ENCODE measurements at regions of chr11 and their contacts with region 1.

Region 1: GRCh38 chr11:63032457-63032856 is 16.8 kb upstream of the SLC22A8 start:
- DNase-seq: no peak
- H3K4me3 Mint-ChIP-seq: no peak overlapping the region
- H3K27ac Mint-ChIP-seq: no peak overlapping the region
- H3K4me1 Mint-ChIP-seq: peaks cover 1% of the 10 kb centered on the region
- H3K27me3 Mint-ChIP-seq: peaks cover 12% of the 10 kb centered on the region

Region 2: DNA sequence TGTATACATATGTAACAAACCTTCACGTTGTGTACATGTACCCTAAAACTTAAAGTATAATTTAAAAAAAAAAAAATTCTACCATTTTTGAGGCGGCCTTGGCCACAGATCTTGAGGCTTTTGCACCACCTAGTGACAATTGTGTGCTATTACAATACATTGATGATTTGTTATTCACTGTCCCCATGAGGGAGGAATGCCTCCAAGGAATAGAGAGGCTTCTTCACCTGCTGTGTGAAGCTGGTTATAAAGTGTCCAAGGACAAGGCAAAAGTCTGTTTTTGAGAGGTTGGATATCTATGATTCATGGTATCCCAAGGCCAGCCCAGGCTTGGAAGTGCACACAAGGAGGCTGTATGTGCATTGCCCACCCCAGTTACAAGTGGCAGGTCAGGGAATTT is 180.3 kb after region 1 on chr11:
- intact Hi-C with region 1: loop called (anchors 1 kb)
- DNase-seq: no peak
- H3K4me3 Mint-ChIP-seq: no peak overlapping the region
- H3K27ac Mint-ChIP-seq: no peak overlapping the region
- H3K4me1 Mint-ChIP-seq: no peaks in the 10 kb centered on the region
- H3K27me3 Mint-ChIP-seq: no peaks in the 10 kb centered on the region

Measured in activated T-helper 2 cell treated with anti-CD3 and anti-CD28 coated beads, Interferon-gamma antibody, Interleukin-2, Interleukin-4, amounts not matched to agents 10 μg/mL and 5 μg/mL and 100 μg/mL, durations not matched to agents 14 hours and 24 hours and 36 hours (primary cell).